ENCODE measurements at regions of chr17 and their contacts with region 1.

Region 1: GRCh38 chr17:63196772-63197335 is 230.8 kb downstream of the TANC2 start:
- DNase-seq: no peak
- ATAC-seq: no peak
- H3K4me3 ChIP-seq: no peak overlapping the region
- H3K27ac ChIP-seq: no peak overlapping the region
- H3K4me1 ChIP-seq: no peaks in the 10 kb centered on the region
- H3K27me3 ChIP-seq: no peaks in the 10 kb centered on the region
- CTCF ChIP-seq: no peak
- EP300 ChIP-seq: no peak
- POLR2A ChIP-seq: no peak
- RAD21 ChIP-seq: no peak

Region 2: DNA sequence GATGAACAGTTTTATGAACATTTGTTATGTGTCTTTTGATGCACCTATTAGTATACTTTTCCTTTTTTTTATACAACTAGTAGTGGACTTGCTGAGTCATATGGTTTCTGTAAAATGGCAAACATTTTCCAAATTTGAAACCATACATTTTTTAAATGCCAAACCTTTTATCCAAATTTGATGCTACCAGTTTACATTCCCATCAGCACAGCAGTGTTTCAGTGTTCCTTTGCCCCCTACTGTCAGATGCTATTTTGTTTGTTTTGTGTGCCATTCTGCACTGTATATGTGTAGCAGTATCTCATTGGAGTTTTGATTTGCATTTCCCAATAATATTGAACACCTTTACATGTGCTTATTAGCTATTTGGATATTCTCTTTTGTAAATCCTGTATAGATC is 11.4 kb before region 1 on chr17:
- CTCF ChIA-PET with region 1: no interaction called
- POLR2A ChIA-PET with region 1: no interaction called
- in situ Hi-C with region 1: no loop called
- intact Hi-C with region 1: loop called (anchors 1 kb)
- DNase-seq: no peak
- ATAC-seq: no peak
- H3K4me3 ChIP-seq: no peak overlapping the region
- H3K27ac ChIP-seq: no peak overlapping the region
- H3K4me1 ChIP-seq: no peaks in the 10 kb centered on the region
- H3K27me3 ChIP-seq: 0 out of 5 replicates have a peak, but pooled peaks cover 0 to 3% of the 10 kb centered on the region in 2 experiments
- CTCF ChIP-seq: no peak
- EP300 ChIP-seq: no peak
- POLR2A ChIP-seq: no peak
- RAD21 ChIP-seq: no peak

Region 3: DNA sequence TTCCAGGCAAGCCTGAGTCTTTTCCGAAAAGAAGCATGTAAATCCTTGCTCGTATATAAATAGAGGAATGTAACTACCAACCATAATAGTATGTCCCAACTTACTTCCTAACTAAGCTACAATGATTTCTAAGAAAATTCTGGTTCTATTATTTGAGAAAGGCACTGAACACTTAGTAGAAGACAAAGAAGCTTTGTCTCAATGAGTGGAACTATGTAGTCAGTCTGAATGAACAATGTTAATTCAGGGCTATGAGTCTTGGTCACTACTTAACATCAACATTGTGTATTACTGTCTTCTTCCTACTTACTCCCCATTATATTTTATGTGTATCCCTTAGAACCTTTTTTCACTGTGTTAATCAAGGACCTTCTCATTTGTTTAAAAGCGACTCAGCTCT is 43.3 kb after region 1 on chr17:
- CTCF ChIA-PET with region 1: no interaction called
- POLR2A ChIA-PET with region 1: no interaction called
- in situ Hi-C with region 1: no loop called
- intact Hi-C with region 1: no loop called
- DNase-seq: no peak
- ATAC-seq: no peak
- H3K4me3 ChIP-seq: no peak overlapping the region
- H3K27ac ChIP-seq: no peak overlapping the region
- H3K4me1 ChIP-seq: no peaks in the 10 kb centered on the region
- H3K27me3 ChIP-seq: peaks cover 0 to 7% of the 10 kb centered on the region in 2 experiments; a peak in 3 of 5 replicates
- CTCF ChIP-seq: no peak
- EP300 ChIP-seq: no peak
- POLR2A ChIP-seq: no peak
- RAD21 ChIP-seq: no peak